Colonic mucosa (tissue), 4 donors: ENCODE measurements at regions of chr1 and their contacts with region 1.

Region 1: DNA sequence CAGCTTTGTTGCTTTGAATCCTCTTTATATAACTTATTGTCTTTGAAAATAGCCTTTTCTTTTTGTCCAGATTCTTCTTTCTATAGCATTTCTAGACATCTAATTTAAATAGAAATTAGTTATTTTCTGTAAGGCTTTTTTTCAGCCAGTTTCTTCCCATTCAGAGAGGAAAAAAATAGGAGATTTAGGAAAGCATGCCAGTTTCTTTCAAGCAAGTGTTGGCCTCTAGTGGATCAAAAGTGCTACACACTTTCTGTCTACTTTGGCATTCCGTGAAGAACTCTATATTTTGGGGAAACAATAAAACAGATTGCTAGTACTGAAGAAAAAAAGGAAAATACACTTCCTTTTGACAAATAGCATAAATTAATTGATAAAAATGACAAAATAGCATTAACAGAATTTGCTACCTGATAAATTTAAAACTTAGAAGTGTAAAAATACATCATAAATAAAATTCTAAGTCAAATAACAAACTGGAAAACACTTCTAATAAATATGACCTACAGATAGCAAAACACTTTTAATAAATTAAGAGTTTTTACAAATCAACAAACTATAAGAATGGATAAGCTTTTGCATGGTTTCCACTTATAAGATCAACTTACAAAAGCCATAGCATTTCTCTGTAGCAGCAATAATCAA is 13.1 kb upstream of the EXO1 start:
- DNase-seq: no peak
- H3K4me3 ChIP-seq: no peak overlapping the region
- H3K27ac ChIP-seq: no peak overlapping the region
- H3K4me1 ChIP-seq: no peaks in the 10 kb centered on the region
- H3K27me3 ChIP-seq: no peaks in the 10 kb centered on the region
- CTCF ChIP-seq: peak; percentile 43

Region 2: DNA sequence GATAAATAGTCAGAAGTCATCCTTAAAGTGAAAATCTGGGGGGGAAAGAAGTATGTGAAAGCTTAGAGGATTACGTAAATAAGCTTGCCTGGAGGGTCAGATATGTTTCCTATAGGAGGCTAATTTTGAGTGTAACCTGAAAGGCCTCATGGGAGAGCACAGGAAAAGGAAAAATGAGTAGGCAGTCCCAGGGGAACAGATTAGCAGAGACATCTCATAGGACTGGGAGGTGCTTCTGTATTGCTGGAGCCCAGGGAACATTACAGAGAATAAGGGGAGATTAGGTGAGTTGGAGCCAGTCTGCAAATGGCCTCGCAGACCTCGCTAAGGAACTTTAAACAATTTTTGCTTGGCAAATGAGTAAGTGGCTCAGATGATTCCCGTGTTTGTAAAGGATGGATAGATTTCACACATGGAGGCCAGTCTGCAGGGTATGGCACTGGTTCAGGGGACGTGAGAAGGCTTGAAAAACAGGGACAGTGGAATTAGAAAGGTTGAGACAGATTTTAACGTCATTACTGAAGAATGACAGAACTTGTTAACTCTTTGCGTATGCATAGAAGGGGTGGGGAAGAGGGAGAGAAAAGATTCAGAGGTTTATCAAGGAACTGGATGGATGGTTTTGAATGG is 1372.0 kb before region 1 on chr1:
- intact Hi-C with region 1: no loop called
- DNase-seq: no peak
- H3K4me3 ChIP-seq: no peak overlapping the region
- H3K27ac ChIP-seq: no peak overlapping the region
- H3K4me1 ChIP-seq: no peaks in the 10 kb centered on the region
- H3K27me3 ChIP-seq: no peaks in the 10 kb centered on the region
- CTCF ChIP-seq: no peak

Region 3: GRCh38 chr1:241531195-241532161 is 303.4 kb before region 1 on chr1:
- intact Hi-C with region 1: loop called (anchors 5 kb)
- DNase-seq: no peak
- H3K4me3 ChIP-seq: peak overlapping the region; percentile 29
- H3K27ac ChIP-seq: peak overlapping the region; percentile 3
- H3K4me1 ChIP-seq: no peaks in the 10 kb centered on the region
- H3K27me3 ChIP-seq: no peaks in the 10 kb centered on the region
- CTCF ChIP-seq: peak; percentile 54

Region 4: GRCh38 chr1:241600496-241600901 is 234.4 kb before region 1 on chr1:
- intact Hi-C with region 1: loop called (anchors 10 kb)
- DNase-seq: no peak
- H3K4me3 ChIP-seq: no peak overlapping the region
- H3K27ac ChIP-seq: no peak overlapping the region
- H3K4me1 ChIP-seq: no peaks in the 10 kb centered on the region
- H3K27me3 ChIP-seq: no peaks in the 10 kb centered on the region
- CTCF ChIP-seq: no peak